ENCODE measurements at regions of chr1 and their contacts with region 1.

Region 1: GRCh38 chr1:151939779-151940178 is 30.5 kb upstream of the THEM4 start:
- DNase-seq: no peak
- H3K4me3 Mint-ChIP-seq: no peak overlapping the region
- H3K27ac Mint-ChIP-seq: no peak overlapping the region
- H3K4me1 Mint-ChIP-seq: peaks cover 38% of the 10 kb centered on the region
- H3K27me3 Mint-ChIP-seq: no peaks in the 10 kb centered on the region

Region 2: DNA sequence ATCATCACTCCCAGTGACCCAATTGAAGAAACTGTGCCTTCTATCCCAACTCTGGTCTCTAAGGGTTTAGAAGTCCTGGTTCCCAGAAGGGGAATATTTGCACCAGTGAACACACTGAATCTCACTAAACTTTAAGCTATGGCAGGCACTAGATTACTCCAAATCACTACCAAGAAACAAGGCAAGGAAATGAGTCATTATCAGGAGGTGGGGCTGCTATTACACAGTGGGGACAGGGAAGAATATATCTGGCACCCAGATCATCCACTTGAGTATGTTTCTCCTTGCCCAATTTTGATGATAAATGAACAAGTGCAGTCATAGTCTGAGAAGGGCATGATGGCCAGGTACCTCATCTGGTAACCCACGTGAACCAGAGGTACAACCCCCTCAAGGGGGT is 183.5 kb before region 1 on chr1:
- CTCF ChIA-PET with region 1: no interaction called
- POLR2A ChIA-PET with region 1: no interaction called
- intact Hi-C with region 1: no loop called
- DNase-seq: peak; percentile 11
- H3K4me3 Mint-ChIP-seq: no peak overlapping the region
- H3K27ac Mint-ChIP-seq: no peak overlapping the region
- H3K4me1 Mint-ChIP-seq: peaks cover 11% of the 10 kb centered on the region
- H3K27me3 Mint-ChIP-seq: peaks cover 3% of the 10 kb centered on the region

Region 3: GRCh38 chr1:151984313-151984956 is 44.7 kb after region 1 on chr1:
- CTCF ChIA-PET with region 1: interaction called, 377 read pairs
- POLR2A ChIA-PET with region 1: interaction called, 13 read pairs
- intact Hi-C with region 1: loop called (anchors 1 kb)
- DNase-seq: peak; percentile 74
- H3K4me3 Mint-ChIP-seq: peak overlapping the region; percentile 24
- H3K27ac Mint-ChIP-seq: peak overlapping the region; percentile 85
- H3K4me1 Mint-ChIP-seq: peaks cover 67% of the 10 kb centered on the region
- H3K27me3 Mint-ChIP-seq: no peaks in the 10 kb centered on the region

Measured in activated CD4-positive, alpha-beta memory T cell treated with anti-CD3 and anti-CD28 coated beads for 36 hours (primary cell).